ENCODE measurements at regions of chr10 and their contacts with region 1.

Region 1: GRCh38 chr10:61750929-61751471 is 88.3 kb downstream of the CABCOCO1 start:
- DNase-seq: peak; percentile 90
- H3K4me3 Mint-ChIP-seq: peak overlapping the region; percentile 58
- H3K27ac Mint-ChIP-seq: peak overlapping the region; percentile 96
- H3K4me1 Mint-ChIP-seq: peaks cover 54% of the 10 kb centered on the region
- H3K27me3 Mint-ChIP-seq: no peaks in the 10 kb centered on the region
- CTCF ChIP-seq: peak; percentile 85

Region 2: DNA sequence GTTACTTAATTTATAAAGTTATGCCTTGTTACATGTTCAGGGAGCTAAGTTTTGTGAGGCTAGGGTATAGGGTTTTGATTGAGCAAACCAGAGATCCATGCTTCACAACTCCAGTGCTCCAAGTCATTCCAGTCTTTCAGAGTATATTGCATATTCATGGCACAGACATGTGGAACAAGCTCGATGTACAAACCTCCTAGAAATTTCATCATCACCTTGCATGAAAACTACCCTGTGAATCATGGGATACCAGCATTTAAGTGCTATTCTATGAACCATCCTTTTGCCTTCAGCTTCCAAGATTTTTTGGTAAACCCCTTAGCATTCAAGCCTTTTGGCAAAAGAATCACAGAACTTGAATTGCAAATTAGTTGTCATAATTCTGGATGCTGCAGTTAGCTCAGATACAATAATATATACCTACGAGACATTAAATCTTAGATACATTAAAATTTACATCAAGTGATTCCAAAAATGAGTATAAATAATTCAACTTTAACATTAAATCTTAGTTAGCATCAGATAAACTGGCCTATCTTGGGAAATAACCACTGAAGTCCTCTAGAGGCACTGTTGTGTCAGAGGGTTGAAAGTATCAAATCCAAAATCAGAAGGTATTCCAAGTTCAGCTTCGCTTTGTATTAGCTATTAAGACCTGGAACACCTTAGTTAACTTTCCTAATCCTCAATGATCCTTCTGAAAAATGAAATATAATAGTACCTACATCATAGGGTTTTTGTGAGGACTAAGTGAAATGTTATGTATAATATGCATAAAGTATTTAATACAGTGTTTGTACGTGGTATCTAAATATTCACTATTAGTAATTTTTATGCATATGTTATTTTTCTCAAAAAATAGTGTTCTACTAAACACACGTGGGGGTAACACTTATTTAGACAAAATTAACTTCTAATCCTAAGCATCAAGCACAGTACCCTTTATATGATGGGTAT is 143.8 kb before region 1 on chr10:
- CTCF ChIA-PET with region 1: no interaction called
- intact Hi-C with region 1: no loop called
- DNase-seq: no peak
- H3K4me3 Mint-ChIP-seq: no peak overlapping the region
- H3K27ac Mint-ChIP-seq: no peak overlapping the region
- H3K4me1 Mint-ChIP-seq: no peaks in the 10 kb centered on the region
- H3K27me3 Mint-ChIP-seq: no peaks in the 10 kb centered on the region
- CTCF ChIP-seq: peak; percentile 45

Region 3: DNA sequence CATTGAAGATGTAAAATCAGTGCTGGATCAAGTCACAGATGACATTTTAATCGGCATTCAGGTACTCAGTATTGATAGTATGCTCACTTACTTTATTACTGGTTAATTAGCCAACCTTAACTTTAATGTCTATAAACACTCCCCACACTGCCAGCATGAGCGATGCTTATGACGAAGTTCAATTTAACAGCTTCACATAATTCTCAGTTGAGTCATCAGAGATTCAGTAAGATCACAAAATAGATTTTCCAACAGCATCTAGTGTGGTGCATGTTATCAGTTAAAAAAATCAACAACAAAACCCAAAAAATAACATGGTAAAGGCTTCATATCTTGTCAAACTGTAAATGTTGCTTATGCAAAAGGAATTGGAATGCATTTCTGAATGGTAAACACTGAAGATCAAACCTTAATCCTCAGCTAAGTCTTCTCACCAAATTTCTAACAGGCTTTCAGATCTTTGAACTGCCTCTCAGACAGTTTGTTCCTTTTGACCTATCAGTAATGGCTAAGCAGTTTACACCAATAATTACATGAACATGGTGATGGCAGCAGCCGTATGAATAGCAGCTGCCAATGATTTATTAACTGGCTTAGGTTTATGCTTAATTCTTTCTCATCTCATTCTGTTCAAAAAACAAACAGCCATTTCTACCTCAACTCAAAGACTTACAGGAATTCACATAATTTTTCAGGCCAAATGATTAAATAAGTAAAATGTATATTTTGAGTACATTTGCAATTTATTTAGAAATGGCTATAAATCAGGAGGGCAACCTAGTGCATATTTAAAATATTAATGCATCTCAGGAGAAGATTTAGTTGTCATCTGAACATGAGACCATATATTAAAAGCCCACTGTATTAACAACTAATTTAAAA is 10.2 kb after region 1 on chr10:
- CTCF ChIA-PET with region 1: interaction called, 34 read pairs
- intact Hi-C with region 1: no loop called
- DNase-seq: no peak
- H3K4me3 Mint-ChIP-seq: peak overlapping the region; percentile 57
- H3K27ac Mint-ChIP-seq: peak overlapping the region; percentile 95
- H3K4me1 Mint-ChIP-seq: peaks cover 56% of the 10 kb centered on the region
- H3K27me3 Mint-ChIP-seq: no peaks in the 10 kb centered on the region
- CTCF ChIP-seq: no peak

Region 4: DNA sequence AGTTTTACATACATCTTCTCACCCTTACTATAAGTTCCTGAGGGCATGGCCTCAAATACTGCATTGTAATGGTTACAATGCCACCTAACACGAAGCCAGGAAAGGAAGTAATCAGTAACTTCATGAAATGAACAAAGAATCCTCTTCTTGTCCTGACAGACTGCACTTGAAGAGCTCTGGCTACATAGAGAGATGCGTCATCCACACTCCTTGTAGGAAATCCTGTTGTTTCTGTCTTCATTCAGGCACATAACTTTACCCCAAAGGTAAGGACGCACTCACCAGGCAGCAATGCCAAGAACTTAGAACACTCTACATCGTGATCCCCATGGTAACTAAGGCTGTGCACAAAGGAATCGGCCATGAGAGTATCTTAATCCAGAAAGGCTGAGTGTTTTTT is 70.2 kb after region 1 on chr10:
- CTCF ChIA-PET with region 1: interaction called, 78 read pairs
- intact Hi-C with region 1: loop called (anchors 1 kb)
- DNase-seq: no peak
- H3K4me3 Mint-ChIP-seq: no peak overlapping the region
- H3K27ac Mint-ChIP-seq: no peak overlapping the region
- H3K4me1 Mint-ChIP-seq: peaks cover 26% of the 10 kb centered on the region
- H3K27me3 Mint-ChIP-seq: no peaks in the 10 kb centered on the region
- CTCF ChIP-seq: no peak

Region 5: DNA sequence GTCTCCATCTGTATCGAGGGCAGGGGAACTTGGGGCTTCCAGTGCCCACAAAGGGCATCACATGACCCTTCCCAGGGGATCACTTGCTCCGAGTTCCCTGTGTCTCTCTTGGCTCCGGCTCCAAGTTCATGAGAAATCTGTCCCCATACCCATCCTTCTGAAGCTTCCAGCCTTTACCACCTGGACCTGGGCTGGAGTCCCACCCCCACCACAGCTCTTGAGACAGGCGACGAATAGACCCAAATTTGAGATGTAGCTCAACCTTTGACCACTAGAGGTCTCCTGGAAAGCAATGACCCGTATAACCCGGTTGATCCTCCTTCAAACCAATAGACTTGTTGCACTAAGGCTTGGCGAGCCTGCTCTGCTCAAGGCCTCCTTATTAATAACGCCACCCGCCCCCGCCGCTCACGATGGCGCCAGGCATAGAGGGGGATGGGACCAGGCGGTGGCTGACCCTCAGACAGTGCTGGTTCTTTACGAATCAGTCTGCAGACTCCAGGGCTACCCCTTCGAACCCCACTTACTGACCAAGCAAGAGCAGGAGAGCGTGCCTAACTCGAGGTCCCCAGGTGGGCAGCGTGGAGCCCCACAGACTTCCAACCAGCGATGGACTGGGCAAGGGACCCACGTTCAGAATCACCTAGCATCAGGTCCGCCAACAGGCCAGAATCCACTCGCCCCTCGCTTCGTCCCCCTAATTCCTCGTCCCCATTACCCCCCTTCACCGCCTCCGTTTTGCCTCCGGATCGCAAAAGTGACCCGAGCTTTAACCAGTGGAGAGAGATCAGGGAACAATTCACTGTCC is 146.1 kb after region 1 on chr10:
- CTCF ChIA-PET with region 1: interaction called, 13 read pairs
- intact Hi-C with region 1: loop called (anchors 2 kb)
- DNase-seq: peak; percentile 71
- H3K4me3 Mint-ChIP-seq: peak overlapping the region; percentile 42
- H3K27ac Mint-ChIP-seq: no peak overlapping the region
- H3K4me1 Mint-ChIP-seq: peaks cover 37% of the 10 kb centered on the region
- H3K27me3 Mint-ChIP-seq: no peaks in the 10 kb centered on the region
- CTCF ChIP-seq: peak; percentile 75